ENCODE measurements at regions of chr9 and their contacts with region 1.

Region 1: GRCh38 chr9:91422758-91423711 is 597 bp downstream of the NFIL3 start:
- DNase-seq: peak; percentile 71
- H3K4me3 Mint-ChIP-seq: peak overlapping the region; percentile 98
- H3K27ac Mint-ChIP-seq: peak overlapping the region; percentile 93
- H3K4me1 Mint-ChIP-seq: peaks cover 62% of the 10 kb centered on the region
- H3K27me3 Mint-ChIP-seq: peaks cover 4% of the 10 kb centered on the region

Region 2: DNA sequence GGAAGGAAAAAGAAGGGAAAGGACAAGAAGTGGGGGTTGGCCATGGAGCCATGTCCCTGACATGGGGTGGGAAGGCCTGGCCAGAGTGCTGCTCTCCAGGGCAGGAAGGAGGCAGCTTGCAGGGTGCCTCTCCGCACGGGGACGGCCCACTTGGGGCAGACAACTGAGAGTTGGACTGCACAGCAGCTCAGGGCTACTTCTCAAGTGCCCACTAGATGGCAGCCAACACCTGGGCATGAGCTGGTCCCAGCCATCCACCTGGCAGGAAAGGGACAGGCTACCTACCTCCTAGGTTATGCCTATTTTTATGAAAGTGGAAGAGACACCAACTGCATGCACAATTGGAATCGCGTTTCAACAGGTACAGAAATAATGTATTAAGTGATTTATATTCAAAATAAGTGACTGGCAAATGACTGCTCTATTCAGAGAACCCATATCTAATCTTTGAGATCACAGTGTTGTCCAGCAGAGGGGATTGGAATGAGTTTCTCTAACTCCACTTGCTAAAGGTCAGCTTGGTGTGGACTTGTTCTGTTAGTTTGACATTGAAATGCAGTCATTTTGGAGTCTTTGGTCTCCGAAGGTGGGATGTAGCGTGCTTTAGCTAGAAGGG is 508.1 kb before region 1 on chr9:
- CTCF ChIA-PET with region 1: interaction called, 84 read pairs
- POLR2A ChIA-PET with region 1: no interaction called
- intact Hi-C with region 1: no loop called
- DNase-seq: peak; percentile 81
- H3K4me3 Mint-ChIP-seq: no peak overlapping the region
- H3K27ac Mint-ChIP-seq: no peak overlapping the region
- H3K4me1 Mint-ChIP-seq: no peaks in the 10 kb centered on the region
- H3K27me3 Mint-ChIP-seq: no peaks in the 10 kb centered on the region

Region 3: GRCh38 chr9:91089405-91090129 is 333.5 kb before region 1 on chr9:
- CTCF ChIA-PET with region 1: interaction called, 8 read pairs
- POLR2A ChIA-PET with region 1: no interaction called
- intact Hi-C with region 1: loop called (anchors 5 kb)
- DNase-seq: peak; percentile 45
- H3K4me3 Mint-ChIP-seq: no peak overlapping the region
- H3K27ac Mint-ChIP-seq: peak overlapping the region; percentile 35
- H3K4me1 Mint-ChIP-seq: peaks cover 40% of the 10 kb centered on the region
- H3K27me3 Mint-ChIP-seq: no peaks in the 10 kb centered on the region

Region 4: GRCh38 chr9:91150998-91151717 is 271.9 kb before region 1 on chr9:
- CTCF ChIA-PET with region 1: interaction called, 6 read pairs
- POLR2A ChIA-PET with region 1: interaction called, 21 read pairs
- intact Hi-C with region 1: loop called (anchors 1 kb)
- DNase-seq: peak; percentile 55
- H3K4me3 Mint-ChIP-seq: peak overlapping the region; percentile 32
- H3K27ac Mint-ChIP-seq: peak overlapping the region; percentile 97
- H3K4me1 Mint-ChIP-seq: peaks cover 72% of the 10 kb centered on the region
- H3K27me3 Mint-ChIP-seq: no peaks in the 10 kb centered on the region

Region 5: DNA sequence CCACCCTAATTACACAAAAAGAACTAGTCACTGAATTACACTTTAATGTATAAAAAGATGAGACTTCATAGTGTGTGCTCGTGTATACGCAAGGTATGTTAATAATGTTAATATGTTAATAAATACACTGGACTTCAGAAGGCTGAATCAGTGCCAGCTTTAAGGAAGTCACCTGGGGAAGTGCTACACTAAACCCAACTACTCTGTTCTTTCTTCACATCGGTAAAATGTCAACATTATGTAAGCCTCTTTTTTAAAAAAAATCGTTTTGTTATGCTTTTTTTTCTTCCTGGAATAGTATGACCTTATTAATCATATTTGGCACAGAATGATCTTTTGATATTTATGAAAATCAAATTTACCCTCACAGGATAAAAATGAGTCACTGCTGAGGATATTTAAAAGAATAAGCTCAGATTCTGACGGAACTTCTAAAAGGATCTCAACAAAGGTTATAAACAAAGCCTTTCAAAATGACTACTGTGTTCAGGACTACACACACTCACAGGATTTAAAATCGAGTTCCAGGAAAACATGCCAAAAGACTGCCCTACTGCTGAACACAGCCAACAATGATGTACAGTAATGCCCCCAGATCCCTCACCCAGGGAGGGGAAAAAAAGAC is 137.2 kb before region 1 on chr9:
- CTCF ChIA-PET with region 1: no interaction called
- POLR2A ChIA-PET with region 1: no interaction called
- intact Hi-C with region 1: loop called (anchors 5 kb)
- DNase-seq: no peak
- H3K4me3 Mint-ChIP-seq: no peak overlapping the region
- H3K27ac Mint-ChIP-seq: peak overlapping the region; percentile 78
- H3K4me1 Mint-ChIP-seq: peaks cover 19% of the 10 kb centered on the region
- H3K27me3 Mint-ChIP-seq: no peaks in the 10 kb centered on the region

Region 6: GRCh38 chr9:91433180-91433579 is 10.1 kb after region 1 on chr9:
- CTCF ChIA-PET with region 1: interaction called, 4 read pairs
- POLR2A ChIA-PET with region 1: no interaction called
- intact Hi-C with region 1: loop called (anchors 1 kb)
- DNase-seq: no peak
- H3K4me3 Mint-ChIP-seq: no peak overlapping the region
- H3K27ac Mint-ChIP-seq: no peak overlapping the region
- H3K4me1 Mint-ChIP-seq: peaks cover 15% of the 10 kb centered on the region
- H3K27me3 Mint-ChIP-seq: peaks cover 14% of the 10 kb centered on the region

Measured in activated CD4-positive, alpha-beta memory T cell treated with anti-CD3 and anti-CD28 coated beads for 36 hours (primary cell).